Common myeloid progenitor, CD34-positive (primary cell): ENCODE measurements at regions of chr4 and their contacts with region 1.

Region 1: GRCh38 chr4:38675146-38676121 is 11.4 kb downstream of the KLF3 start:
- DNase-seq: peak; percentile 86 to 93 (median 87)
- H3K4me3 ChIP-seq: peak overlapping the region in 5 of 7 experiments; percentile 40 to 60 (median 50)
- H3K27ac ChIP-seq: peak overlapping the region; percentile 35 to 74
- H3K4me1 ChIP-seq: peaks cover 28 to 55% (median 54%) of the 10 kb centered on the region in 4 experiments
- H3K27me3 ChIP-seq: no peaks in the 10 kb centered on the region

Region 2: DNA sequence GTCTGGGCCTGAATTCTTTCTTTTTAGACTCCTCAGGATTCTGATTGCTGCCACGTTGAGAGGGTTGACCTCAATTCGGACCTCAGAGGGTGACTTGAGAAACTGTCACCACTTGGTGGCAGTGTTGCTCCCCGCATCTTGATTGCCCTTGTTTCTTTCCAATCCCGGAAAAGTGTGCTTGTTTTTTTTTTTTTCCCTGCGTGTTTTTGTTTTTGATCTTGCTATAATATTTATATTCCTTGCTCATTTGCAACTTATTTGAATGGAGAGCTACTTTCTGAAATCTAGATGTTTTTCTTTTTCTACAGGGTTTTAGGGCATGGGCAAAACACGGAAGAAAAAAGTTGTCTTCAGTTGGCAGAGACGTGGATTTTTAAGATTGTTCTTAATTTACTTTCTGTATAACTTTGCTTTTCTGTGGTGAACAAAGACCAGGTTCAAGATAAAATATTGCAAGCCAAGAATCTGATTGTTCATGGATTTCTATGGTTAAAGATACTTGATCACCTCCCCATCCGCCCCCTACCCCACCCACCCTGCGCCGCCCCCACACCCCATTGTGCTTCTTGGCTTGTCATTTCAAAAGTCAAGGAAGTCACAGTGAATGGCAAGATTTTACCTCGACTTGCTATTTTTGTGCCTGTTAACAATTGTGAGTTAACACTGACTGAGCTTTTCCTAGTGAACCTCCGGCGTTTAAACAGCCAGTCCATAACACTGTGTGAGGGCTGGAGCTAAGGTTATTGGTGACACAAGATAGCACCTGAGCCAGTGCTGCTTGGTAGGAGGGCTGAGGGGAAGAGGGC is 613.1 kb before region 1 on chr4:
- CTCF ChIA-PET with region 1: interaction called, 13 read pairs
- POLR2A ChIA-PET with region 1: no interaction called
- DNase-seq: peak; percentile 67 to 78 (median 71)
- H3K4me3 ChIP-seq: peak overlapping the region in 5 of 7 experiments; percentile 15 to 75 (median 47)
- H3K27ac ChIP-seq: no peak overlapping the region
- H3K4me1 ChIP-seq: peaks cover 0 to 4% (median 0%) of the 10 kb centered on the region in 4 experiments
- H3K27me3 ChIP-seq: no peaks in the 10 kb centered on the region

Region 3: DNA sequence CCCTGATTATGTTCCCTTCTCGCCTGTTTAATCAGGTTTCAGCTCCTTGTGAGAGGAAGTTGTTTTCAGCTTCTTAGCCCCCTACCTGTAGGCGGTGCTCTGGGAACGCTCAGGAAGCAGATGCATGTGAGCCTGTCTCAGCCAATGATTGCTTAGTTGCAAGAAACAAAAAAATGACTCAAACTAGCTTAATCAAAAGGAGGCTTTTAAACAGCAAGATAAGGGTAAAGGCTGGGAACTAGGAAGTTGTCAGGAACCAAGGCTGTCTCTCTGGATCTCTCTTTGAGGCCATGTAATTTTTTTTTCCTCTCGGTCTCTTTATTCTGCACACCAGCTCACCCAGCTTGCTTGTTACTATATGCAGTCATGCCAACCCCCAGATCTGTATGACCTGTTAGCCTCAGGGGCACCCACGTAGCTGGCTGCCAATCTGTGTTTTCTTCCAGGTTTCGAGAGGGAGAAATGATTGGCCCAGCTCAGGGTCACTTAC is 606.1 kb before region 1 on chr4:
- CTCF ChIA-PET with region 1: interaction called, 17 read pairs
- POLR2A ChIA-PET with region 1: interaction called, 3 read pairs
- DNase-seq: peak; percentile 55 to 79 (median 65)
- H3K4me3 ChIP-seq: no peak overlapping the region
- H3K27ac ChIP-seq: no peak overlapping the region
- H3K4me1 ChIP-seq: peaks cover 8 to 25% (median 17%) of the 10 kb centered on the region in 4 experiments
- H3K27me3 ChIP-seq: no peaks in the 10 kb centered on the region

Region 4: GRCh38 chr4:38319456-38320342 is 355.7 kb before region 1 on chr4:
- CTCF ChIA-PET with region 1: interaction called, 79 read pairs
- POLR2A ChIA-PET with region 1: no interaction called
- DNase-seq: peak; percentile 83 to 92 (median 90)
- H3K4me3 ChIP-seq: peak overlapping the region in 6 of 7 experiments; percentile 40 to 82 (median 69)
- H3K27ac ChIP-seq: peak overlapping the region in 1 of 2 experiments; percentile 72
- H3K4me1 ChIP-seq: peaks cover 10 to 27% (median 19%) of the 10 kb centered on the region in 4 experiments
- H3K27me3 ChIP-seq: no peaks in the 10 kb centered on the region

Region 5: DNA sequence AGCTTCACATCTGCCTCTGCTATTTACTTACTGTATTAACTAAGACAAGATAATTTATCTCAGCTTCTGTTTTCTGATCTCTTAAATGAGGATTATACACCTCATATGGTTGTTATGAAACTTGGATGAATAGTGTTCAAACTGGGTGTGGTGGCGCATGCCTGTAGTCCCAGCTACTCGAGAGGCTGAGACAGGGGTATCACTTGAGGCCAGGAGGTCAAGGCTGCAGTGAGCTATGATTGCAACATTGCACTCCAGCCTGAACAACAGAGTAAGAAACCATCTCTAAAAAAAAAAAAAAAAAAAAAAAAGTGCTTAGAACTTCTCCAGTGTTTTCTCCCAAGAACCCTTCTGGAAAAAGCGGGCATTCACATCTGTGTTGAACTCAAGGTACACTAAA is 31.2 kb before region 1 on chr4:
- CTCF ChIA-PET with region 1: interaction called, 10 read pairs
- POLR2A ChIA-PET with region 1: no interaction called
- DNase-seq: no peak
- H3K4me3 ChIP-seq: no peak overlapping the region
- H3K27ac ChIP-seq: no peak overlapping the region
- H3K4me1 ChIP-seq: peaks cover 0 to 11% (median 5%) of the 10 kb centered on the region in 4 experiments
- H3K27me3 ChIP-seq: no peaks in the 10 kb centered on the region

Region 6: DNA sequence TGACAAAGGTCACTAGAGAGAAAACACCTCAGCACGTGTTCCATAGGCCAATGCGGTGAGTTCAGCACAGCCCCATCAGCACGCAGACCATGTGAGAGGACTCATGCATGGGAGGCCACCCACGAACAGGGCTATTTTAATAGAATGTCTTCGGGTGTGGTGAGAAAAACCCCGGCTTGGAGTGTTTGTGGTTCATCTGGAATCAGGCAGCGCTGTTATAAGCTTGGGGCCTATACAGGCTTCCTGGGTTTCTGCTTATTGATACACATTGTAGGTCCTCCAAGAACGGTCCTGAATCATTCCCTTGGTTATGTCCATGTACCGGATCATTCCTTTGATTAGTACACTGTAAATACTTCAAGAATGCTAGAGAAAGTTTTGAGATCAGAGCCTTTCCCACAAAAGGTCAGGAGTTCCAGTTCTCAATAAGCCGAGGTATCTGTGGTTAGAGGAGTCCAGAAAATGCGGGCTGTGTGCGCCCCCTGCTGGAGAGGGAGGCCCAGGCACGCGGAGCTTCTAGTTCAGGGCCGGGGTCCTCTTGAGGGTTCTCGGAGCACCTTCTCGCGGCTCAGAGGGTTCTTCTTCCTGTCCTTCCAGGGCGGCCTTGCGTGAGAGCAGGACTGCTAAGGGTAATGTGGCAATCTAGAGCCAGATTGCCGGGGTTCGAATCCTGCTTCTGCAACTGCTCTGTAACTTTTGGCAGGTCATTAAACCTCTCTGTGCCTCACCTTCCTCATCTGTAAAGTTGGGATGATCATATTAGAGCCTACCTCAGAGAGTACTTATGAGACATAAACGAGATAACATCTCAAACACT is 55.6 kb after region 1 on chr4:
- CTCF ChIA-PET with region 1: interaction called, 27 read pairs
- POLR2A ChIA-PET with region 1: no interaction called
- DNase-seq: peak; percentile 71 to 81 (median 76)
- H3K4me3 ChIP-seq: no peak overlapping the region
- H3K27ac ChIP-seq: no peak overlapping the region
- H3K4me1 ChIP-seq: peaks cover 0 to 8% (median 0%) of the 10 kb centered on the region in 4 experiments
- H3K27me3 ChIP-seq: no peaks in the 10 kb centered on the region